Naive thymus-derived CD4-positive, alpha-beta T cell (primary cell): ENCODE measurements at regions of chr1 and their contacts with region 1.

Region 1: GRCh38 chr1:116372587-116373444 is at the start of gene ATP1A1:
- DNase-seq: peak; percentile 94 to 99 (median 96)
- ATAC-seq: peak; percentile 89
- H3K4me3 ChIP-seq: peak within 1 kb of the TSS; percentile 94
- H3K4me3 Mint-ChIP-seq: peak within 1 kb of the TSS; percentile 91 to 99 (median 98)
- H3K27ac ChIP-seq: peak within 1 kb of the TSS; percentile 98
- H3K27ac Mint-ChIP-seq: peak within 1 kb of the TSS; percentile 89 to 98 (median 96)
- H3K4me1 ChIP-seq: peaks cover 18 to 20% of the 10 kb centered on the region in 2 donors
- H3K4me1 Mint-ChIP-seq: peaks cover 15 to 54% (median 35%) of the 10 kb centered on the region in 7 donors
- H3K27me3 ChIP-seq: no peaks in the 10 kb centered on the region
- H3K27me3 Mint-ChIP-seq: peaks cover 0 to 29% (median 0%) of the 10 kb centered on the region in 5 donors
- total RNA-seq, gene ATP1A1: 228 to 315 (median 287) TPM

Region 2: GRCh38 chr1:116232989-116233514 is 139.8 kb before region 1 on chr1:
- CTCF ChIA-PET with region 1: interaction called, 17 read pairs
- POLR2A ChIA-PET with region 1: interaction called, 7 read pairs
- intact Hi-C with region 1: loop called (anchors 1 to 5 kb)
- DNase-seq: peak in 7 of 9 donors; percentile 29 to 66 (median 52)
- ATAC-seq: peak; percentile 82
- H3K4me3 ChIP-seq: no peak overlapping the region
- H3K4me3 Mint-ChIP-seq: peak overlapping the region in 6 of 10 donors; percentile 1 to 73 (median 26)
- H3K27ac ChIP-seq: no peak overlapping the region
- H3K27ac Mint-ChIP-seq: peak overlapping the region in 7 of 9 donors; percentile 5 to 90 (median 69)
- H3K4me1 ChIP-seq: peaks cover 4 to 10% of the 10 kb centered on the region in 2 donors
- H3K4me1 Mint-ChIP-seq: peaks cover 6 to 29% (median 25%) of the 10 kb centered on the region in 7 donors
- H3K27me3 ChIP-seq: no peaks in the 10 kb centered on the region
- H3K27me3 Mint-ChIP-seq: peaks cover 0 to 19% (median 0%) of the 10 kb centered on the region in 5 donors

Region 3: DNA sequence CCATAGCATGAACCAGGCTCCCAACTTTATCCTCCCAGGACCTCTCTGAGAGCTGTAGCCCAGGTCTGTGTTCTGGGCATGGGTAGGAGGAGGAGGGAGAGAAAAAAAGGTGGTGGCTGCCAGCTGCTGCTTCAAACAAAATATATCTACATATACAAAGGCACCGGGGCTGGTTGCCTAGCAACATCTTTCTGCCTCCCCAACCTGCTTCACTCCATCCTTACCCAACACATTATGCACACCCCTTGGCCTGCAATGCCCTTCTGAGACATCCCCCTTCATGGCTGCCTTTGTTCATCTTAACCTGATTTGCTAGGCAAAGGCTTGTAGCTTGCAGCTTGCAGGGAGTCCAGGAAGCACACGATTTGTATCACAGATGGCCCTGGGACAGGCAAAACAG is 27.0 kb before region 1 on chr1:
- CTCF ChIA-PET with region 1: no interaction called
- POLR2A ChIA-PET with region 1: interaction called, 52 read pairs
- intact Hi-C with region 1: loop called in 1 of 2 experiments (anchors 1 kb)
- DNase-seq: peak in 8 of 9 donors; percentile 17 to 89 (median 86)
- ATAC-seq: peak; percentile 93
- H3K4me3 ChIP-seq: no peak overlapping the region
- H3K4me3 Mint-ChIP-seq: peak overlapping the region in 9 of 10 donors; percentile 18 to 77 (median 70)
- H3K27ac ChIP-seq: peak overlapping the region; percentile 72
- H3K27ac Mint-ChIP-seq: peak overlapping the region in 8 of 9 donors; percentile 89 to 98 (median 92)
- H3K4me1 ChIP-seq: peaks cover 9 to 83% of the 10 kb centered on the region in 2 donors
- H3K4me1 Mint-ChIP-seq: peaks cover 10 to 93% (median 89%) of the 10 kb centered on the region in 7 donors
- H3K27me3 ChIP-seq: no peaks in the 10 kb centered on the region
- H3K27me3 Mint-ChIP-seq: peaks cover 0 to 3% (median 0%) of the 10 kb centered on the region in 5 donors

Region 4: DNA sequence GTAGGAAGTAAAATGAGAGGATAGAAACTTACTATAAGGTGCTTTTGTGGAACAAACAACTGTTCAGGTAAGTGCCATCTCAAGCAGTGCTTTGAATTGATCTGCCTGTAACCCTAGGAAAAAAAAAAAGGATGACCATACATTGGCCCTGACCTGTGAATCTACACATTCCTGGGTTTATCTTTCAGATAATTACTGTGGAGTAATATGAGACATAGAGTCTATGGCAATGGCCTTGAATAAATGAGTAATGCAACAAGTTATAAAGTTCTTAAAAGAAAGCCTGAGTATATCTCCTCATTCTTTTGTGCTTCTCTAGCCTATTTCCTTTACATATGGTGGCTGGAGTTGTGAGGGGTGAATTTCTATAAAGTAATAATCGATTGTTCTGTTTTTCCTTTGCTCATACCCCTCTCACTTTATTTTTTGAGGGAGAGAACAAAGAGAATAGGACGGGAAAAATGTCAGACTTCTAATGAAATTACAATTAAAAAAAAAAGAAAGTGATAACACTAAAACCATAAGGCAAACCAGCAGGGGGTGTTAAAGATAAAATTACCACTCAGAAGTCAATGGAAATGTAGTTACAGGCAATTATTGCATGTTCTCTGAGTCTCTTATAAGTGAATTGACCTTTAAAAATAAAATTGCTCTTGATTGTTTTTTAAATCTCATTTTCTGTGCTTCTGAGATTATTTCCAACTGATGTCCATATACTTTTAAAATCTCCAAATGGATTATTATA is 12.2 kb before region 1 on chr1:
- CTCF ChIA-PET with region 1: interaction called, 5 read pairs
- POLR2A ChIA-PET with region 1: interaction called, 13 read pairs
- intact Hi-C with region 1: loop called in 1 of 2 experiments (anchors 1 kb)
- DNase-seq: peak in 3 of 9 donors; percentile 7 to 30 (median 15)
- ATAC-seq: no peak
- H3K4me3 ChIP-seq: no peak overlapping the region
- H3K4me3 Mint-ChIP-seq: no peak overlapping the region
- H3K27ac ChIP-seq: no peak overlapping the region
- H3K27ac Mint-ChIP-seq: peak overlapping the region in 1 of 9 donors; percentile 63
- H3K4me1 ChIP-seq: peaks cover 0 to 13% of the 10 kb centered on the region in 2 donors
- H3K4me1 Mint-ChIP-seq: peaks cover 4 to 55% (median 33%) of the 10 kb centered on the region in 7 donors
- H3K27me3 ChIP-seq: no peaks in the 10 kb centered on the region
- H3K27me3 Mint-ChIP-seq: peaks cover 0 to 24% (median 0%) of the 10 kb centered on the region in 5 donors

Region 5: DNA sequence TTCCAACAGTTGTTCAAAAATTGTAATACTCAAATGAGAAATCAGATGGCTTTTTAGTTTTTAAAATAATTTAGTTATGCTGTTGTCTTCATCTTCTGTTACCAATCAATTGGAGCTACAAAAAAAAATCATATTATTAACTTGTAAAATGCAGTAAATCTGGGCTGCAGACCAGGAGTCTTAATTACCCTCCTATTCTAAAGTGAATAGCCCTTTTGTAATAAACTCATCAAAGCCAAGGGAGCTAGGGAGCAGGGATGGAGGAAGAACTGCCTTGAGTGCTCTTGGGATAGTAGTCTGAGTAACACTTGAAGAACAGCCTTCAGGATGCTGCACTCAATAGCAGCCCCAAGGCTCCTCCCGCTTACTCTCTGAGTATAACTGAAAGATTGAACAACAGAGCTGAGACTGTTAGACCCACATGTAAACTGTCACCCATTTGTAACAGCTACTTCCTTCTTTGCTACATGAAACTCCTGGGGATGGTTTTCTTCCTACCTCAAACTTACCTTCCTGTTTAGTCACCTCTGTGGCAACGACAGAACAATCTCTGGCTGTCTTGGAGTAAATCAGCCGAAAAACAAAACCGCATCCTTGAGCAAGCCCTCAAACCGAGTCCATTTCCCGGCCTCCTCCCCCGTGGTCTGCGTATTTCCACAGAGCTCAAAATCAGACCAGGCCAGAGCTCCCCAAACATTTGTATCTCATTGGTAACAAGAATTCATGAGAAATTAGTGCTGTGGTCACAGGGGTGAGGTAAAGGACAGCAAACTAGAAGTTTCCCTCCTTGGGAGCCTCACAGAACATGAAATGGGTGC is 142.1 kb after region 1 on chr1:
- CTCF ChIA-PET with region 1: no interaction called
- POLR2A ChIA-PET with region 1: no interaction called
- intact Hi-C with region 1: loop called in 1 of 2 experiments (anchors 5 kb)
- DNase-seq: peak in 8 of 9 donors; percentile 11 to 71 (median 30)
- ATAC-seq: peak; percentile 82
- H3K4me3 ChIP-seq: peak overlapping the region; percentile 12
- H3K4me3 Mint-ChIP-seq: peak overlapping the region; percentile 48 to 82 (median 72)
- H3K27ac ChIP-seq: peak overlapping the region; percentile 25
- H3K27ac Mint-ChIP-seq: peak overlapping the region; percentile 66 to 93 (median 88)
- H3K4me1 ChIP-seq: peaks cover 30 to 49% of the 10 kb centered on the region in 2 donors
- H3K4me1 Mint-ChIP-seq: peaks cover 37 to 72% (median 53%) of the 10 kb centered on the region in 7 donors
- H3K27me3 ChIP-seq: no peaks in the 10 kb centered on the region
- H3K27me3 Mint-ChIP-seq: no peaks in the 10 kb centered on the region

Region 6: DNA sequence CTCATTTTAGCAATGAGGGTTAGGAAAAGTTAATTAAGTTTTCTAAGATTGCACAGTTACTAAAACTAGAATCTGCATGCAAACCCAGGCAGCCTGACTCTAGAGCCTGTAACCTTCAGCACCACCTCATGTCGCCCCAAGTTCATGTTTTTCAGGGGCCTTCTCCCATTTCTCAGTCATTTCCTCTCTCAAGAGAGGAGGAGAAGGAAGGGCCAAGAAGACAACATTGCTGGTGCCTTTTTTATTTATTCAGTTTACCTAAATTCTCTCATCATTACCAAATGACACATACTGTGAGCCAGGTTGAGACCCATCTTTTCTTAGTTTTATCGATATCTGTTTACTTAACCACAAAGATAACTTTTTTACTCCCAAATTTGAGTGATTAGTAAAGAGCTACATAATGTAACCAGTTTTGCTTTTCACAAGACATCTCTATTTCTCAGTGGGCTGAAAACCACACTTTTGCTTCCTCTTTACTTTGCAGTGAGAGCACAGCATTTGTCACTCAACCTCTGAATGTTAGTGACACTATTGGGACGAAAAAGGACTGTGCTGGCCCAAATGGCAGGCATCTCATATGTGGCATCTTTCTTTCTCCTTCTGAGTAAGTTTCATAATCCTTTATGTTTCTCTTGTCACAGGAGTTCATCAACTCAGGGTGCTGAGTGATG is 628.6 kb after region 1 on chr1 and contains the start of gene CD101:
- CTCF ChIA-PET with region 1: no interaction called
- POLR2A ChIA-PET with region 1: no interaction called
- intact Hi-C with region 1: loop called in 1 of 2 experiments (anchors 10 kb)
- DNase-seq: peak in 4 of 9 donors; percentile 18 to 39 (median 32)
- ATAC-seq: peak; percentile 72
- H3K4me3 ChIP-seq: peak within 1 kb of the TSS; percentile 17
- H3K4me3 Mint-ChIP-seq: peak within 1 kb of the TSS; percentile 30 to 72 (median 60)
- H3K27ac ChIP-seq: peak within 1 kb of the TSS; percentile 60
- H3K27ac Mint-ChIP-seq: peak within 1 kb of the TSS; percentile 84 to 95 (median 87)
- H3K4me1 ChIP-seq: peaks cover 0 to 48% of the 10 kb centered on the region in 2 donors
- H3K4me1 Mint-ChIP-seq: peaks cover 36 to 72% (median 59%) of the 10 kb centered on the region in 7 donors
- H3K27me3 ChIP-seq: no peaks in the 10 kb centered on the region
- H3K27me3 Mint-ChIP-seq: no peaks in the 10 kb centered on the region
- total RNA-seq, gene CD101: 3.9 to 15.4 (median 10.3) TPM